Dorsolateral prefrontal cortex (tissue), 120 donors: ENCODE measurements at regions of chr10 and their contacts with region 1.

Region 1: GRCh38 chr10:62961951-62962523 is 145.9 kb upstream of the EGR2 start:
- DNase-seq: no peak
- H3K4me3 ChIP-seq: no peak overlapping the region
- H3K27ac ChIP-seq: no peak overlapping the region
- H3K27me3 ChIP-seq: peaks cover 0 to 4% (median 0%) of the 10 kb centered on the region in 45 donors
- CTCF ChIP-seq: no peak

Region 2: GRCh38 chr10:62826273-62826672 is 135.8 kb before region 1 on chr10:
- intact Hi-C with region 1: loop called in 1 of 2 experiments (anchors 10 kb)
- DNase-seq: no peak
- H3K4me3 ChIP-seq: no peak overlapping the region
- H3K27ac ChIP-seq: no peak overlapping the region
- H3K27me3 ChIP-seq: no peaks in the 10 kb centered on the region
- CTCF ChIP-seq: no peak

Region 3: DNA sequence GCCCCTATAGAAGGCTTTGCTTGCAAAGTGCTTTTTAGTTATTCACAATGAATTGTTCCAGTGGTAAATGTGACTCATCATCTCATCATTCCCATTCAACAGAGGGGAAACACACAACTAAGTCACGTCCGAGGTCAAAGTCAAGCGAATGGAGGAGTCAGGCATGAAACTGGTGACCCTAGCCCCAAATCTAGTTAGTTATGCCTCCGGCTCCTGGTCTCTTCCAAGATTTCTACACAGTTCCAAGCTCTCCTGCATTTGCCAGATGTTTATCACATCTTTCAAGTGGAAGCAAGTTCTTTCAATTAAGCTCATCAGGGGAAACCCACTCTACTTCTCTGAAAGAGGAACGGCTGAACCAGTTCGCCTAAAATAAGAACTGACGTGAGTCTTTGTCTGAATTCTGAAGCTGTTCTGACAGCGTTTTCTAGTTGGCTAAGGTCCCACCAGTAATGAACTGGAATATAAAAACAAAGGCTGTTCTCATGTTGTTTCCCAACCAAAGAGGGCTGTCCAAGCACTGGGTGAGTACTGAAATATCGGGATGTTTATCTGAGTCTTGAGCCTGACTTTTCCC is 30.2 kb after region 1 on chr10:
- intact Hi-C with region 1: no loop called
- DNase-seq: no peak
- H3K4me3 ChIP-seq: peak overlapping the region in 16 of 59 donors; percentile 1 to 47 (median 18)
- H3K27ac ChIP-seq: peak overlapping the region in 2 of 59 donors; percentile 16 to 21
- H3K27me3 ChIP-seq: peaks cover 0 to 14% (median 0%) of the 10 kb centered on the region in 45 donors
- CTCF ChIP-seq: no peak